GM10248 (cell line): ENCODE measurements at regions of chr9 and their contacts with region 1.

Region 1: GRCh38 chr9:36560857-36561221 is 11.9 kb upstream of the MELK start:
- DNase-seq: no peak
- CTCF ChIP-seq: no peak

Region 2: DNA sequence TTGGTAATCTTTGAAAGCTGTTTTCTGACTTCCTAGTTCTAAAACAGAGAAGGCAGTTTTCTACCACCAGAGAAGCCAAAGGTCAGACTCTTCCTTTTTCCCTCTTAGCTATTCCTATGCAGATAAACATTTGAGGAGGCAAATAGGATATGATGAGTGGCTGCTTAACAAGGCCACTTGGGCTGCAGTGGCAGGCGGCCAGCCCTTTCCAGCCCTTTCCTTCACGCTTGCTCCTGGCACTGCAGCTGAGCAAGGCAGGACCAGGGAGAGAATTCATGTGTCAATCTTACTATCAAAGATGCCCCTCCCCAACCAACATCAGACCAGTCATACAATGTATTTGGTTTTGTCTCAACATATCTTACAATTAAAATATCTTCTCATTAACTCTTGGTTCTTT is 123.9 kb before region 1 on chr9:
- CTCF ChIA-PET with region 1: interaction called, 10 read pairs
- POLR2A ChIA-PET with region 1: no interaction called
- DNase-seq: no peak
- CTCF ChIP-seq: no peak

Region 3: GRCh38 chr9:36450110-36450732 is 110.6 kb before region 1 on chr9:
- CTCF ChIA-PET with region 1: interaction called, 16 read pairs
- POLR2A ChIA-PET with region 1: no interaction called
- DNase-seq: peak; percentile 28
- CTCF ChIP-seq: peak; percentile 58

Region 4: DNA sequence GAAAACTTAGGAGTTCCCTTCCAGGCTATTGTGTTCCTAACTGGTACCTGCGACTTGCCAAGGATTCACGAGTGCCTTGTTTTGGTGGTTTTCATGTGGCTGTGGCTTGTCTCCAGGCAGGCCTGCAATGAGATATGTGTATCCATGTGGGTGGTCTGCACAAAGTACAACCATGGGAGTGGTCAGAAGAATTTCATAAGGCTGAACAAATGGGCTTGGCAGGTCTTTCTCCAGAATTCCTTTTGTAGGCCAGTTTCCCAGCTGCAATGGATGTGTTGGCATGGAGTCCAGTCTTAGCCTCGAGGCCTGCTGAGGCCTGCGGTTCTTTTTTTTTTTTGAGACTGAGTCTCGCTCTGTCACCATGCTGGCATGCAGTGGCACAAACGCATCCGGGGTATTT is 16.9 kb before region 1 on chr9:
- CTCF ChIA-PET with region 1: interaction called, 12 read pairs
- POLR2A ChIA-PET with region 1: no interaction called
- DNase-seq: no peak
- CTCF ChIP-seq: no peak

Region 5: GRCh38 chr9:36572515-36573418 is 11.9 kb after region 1 on chr9 and contains the start of gene MELK:
- CTCF ChIA-PET with region 1: interaction called, 21 read pairs
- POLR2A ChIA-PET with region 1: no interaction called
- DNase-seq: peak; percentile 95
- CTCF ChIP-seq: no peak